Activated CD8-positive, alpha-beta T cell treated with anti-CD3 and anti-CD28 coated beads, Interleukin-2, amount 10 ng/mL, durations not matched to agents 7 days and 5 days (primary cell): ENCODE measurements at regions of chr18 and their contacts with region 1.

Region 1: DNA sequence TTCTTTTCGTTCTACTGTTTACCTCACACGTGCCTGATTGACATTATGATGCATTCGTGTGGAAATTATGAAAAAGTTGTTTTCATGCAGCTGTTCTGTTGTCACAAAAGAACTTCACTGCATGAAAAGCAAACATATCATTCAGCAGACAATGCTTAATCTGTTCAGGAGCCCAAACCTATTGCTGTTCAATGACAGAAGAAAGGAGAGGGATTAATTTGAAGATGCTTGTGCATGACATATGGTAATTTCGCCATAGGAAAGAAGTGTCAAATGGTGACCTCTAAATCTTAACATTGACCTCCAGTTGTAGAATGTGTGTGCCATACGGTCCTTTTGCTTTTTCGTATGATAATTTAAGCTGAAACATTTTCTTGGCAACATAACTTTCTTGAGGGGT is 124.5 kb downstream of the WDR7 start:
- DNase-seq: no peak
- ATAC-seq: no peak
- H3K4me3 Mint-ChIP-seq: no peak overlapping the region
- H3K27ac Mint-ChIP-seq: no peak overlapping the region
- H3K4me1 Mint-ChIP-seq: no peaks in the 10 kb centered on the region
- H3K27me3 Mint-ChIP-seq: no peaks in the 10 kb centered on the region

Region 2: GRCh38 chr18:56593906-56594305 is 181.8 kb before region 1 on chr18:
- CTCF ChIA-PET with region 1: no interaction called
- POLR2A ChIA-PET with region 1: no interaction called
- DNase-seq: no peak
- ATAC-seq: no peak
- H3K4me3 Mint-ChIP-seq: no peak overlapping the region
- H3K27ac Mint-ChIP-seq: no peak overlapping the region
- H3K4me1 Mint-ChIP-seq: no peaks in the 10 kb centered on the region
- H3K27me3 Mint-ChIP-seq: peaks cover 2% of the 10 kb centered on the region

Region 3: GRCh38 chr18:56748698-56749268 is 26.9 kb before region 1 on chr18:
- CTCF ChIA-PET with region 1: no interaction called
- POLR2A ChIA-PET with region 1: no interaction called
- DNase-seq: no peak
- ATAC-seq: no peak
- H3K4me3 Mint-ChIP-seq: no peak overlapping the region
- H3K27ac Mint-ChIP-seq: no peak overlapping the region
- H3K4me1 Mint-ChIP-seq: peaks cover 18% of the 10 kb centered on the region
- H3K27me3 Mint-ChIP-seq: no peaks in the 10 kb centered on the region

Region 4: DNA sequence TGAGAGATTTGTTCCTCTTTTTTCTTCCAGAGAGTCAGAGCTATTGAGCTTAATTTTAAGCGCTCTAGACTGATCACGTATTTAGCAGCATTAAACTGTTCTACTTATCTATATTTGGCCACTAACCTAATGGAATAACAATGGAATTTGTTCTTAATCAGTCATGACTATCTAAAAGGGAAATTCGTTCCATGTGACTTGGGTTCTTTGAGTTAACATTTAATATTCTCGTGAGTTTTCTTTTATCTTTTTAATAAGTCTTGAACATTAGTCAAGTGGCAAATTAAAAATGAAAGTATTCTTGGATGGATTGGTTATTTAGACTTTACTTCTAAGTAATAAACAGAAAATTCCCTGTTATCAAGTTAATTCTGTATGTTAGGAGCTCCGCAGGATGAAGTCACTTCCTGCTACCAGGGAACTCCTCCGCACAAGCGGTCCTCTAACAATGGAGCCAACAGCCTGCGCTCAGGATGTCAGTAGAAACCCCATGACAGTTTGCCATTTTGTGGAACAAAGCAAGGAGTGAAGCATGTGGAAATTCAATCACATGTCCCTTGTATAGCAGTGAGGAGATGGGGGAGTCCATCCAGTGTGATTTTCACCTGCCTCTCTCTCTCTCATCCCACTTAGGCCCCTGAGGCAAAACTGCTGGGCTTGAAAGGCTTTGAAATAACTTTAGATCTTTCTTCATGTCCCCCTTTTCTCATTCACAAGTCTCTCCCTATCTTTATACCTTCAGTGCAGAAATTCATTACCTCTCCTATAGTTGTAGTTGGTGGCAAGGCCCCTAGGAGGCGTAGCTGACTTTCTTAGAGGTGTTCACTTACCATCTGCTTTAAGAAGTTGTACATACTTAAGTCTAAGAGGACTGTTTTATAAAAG is 13.5 kb after region 1 on chr18:
- CTCF ChIA-PET with region 1: interaction called, 12 read pairs
- POLR2A ChIA-PET with region 1: no interaction called
- DNase-seq: peak; percentile 38
- ATAC-seq: no peak
- H3K4me3 Mint-ChIP-seq: no peak overlapping the region
- H3K27ac Mint-ChIP-seq: no peak overlapping the region
- H3K4me1 Mint-ChIP-seq: no peaks in the 10 kb centered on the region
- H3K27me3 Mint-ChIP-seq: no peaks in the 10 kb centered on the region

Region 5: DNA sequence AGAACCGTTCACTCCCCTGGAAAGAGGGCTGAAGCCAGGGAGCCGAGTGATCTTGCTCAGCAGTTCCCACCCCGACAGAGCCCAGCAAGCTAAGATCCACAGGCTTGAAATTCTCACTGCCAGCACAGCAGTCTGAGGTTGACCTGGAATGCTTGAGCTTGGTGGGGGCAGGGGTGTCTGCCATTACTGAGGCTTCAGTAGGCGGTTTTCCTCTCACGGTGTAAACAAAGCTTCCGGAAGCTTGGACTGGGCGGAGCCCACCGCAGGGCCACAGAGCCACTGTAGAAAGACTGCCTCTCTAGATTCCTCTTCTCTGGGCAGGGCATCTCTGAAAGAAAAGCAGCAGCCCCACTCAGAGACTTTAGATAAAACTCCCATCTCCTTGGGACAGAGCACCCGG is 56.3 kb after region 1 on chr18:
- CTCF ChIA-PET with region 1: no interaction called
- POLR2A ChIA-PET with region 1: no interaction called
- DNase-seq: no peak
- ATAC-seq: no peak
- H3K4me3 Mint-ChIP-seq: no peak overlapping the region
- H3K27ac Mint-ChIP-seq: no peak overlapping the region
- H3K4me1 Mint-ChIP-seq: peaks cover 6% of the 10 kb centered on the region
- H3K27me3 Mint-ChIP-seq: no peaks in the 10 kb centered on the region

Region 6: DNA sequence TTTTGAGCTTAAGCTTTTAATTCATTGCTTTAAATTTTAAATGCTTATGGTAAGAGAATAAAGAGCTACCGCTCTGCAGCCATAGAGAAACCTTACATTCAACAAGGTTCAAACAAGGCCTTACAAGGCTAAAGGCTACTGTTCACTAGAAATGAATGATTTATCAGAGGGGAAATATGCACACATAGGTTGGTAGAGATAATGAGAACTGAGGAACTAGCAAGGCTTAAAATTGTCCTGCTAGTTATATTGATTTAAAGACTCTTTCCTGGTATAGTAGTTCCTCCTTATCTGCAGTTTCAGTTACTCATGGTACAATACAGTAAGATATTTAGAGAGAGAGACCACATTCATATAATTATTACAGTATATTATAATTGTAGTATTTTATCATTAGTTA is 68.9 kb after region 1 on chr18:
- CTCF ChIA-PET with region 1: no interaction called
- POLR2A ChIA-PET with region 1: no interaction called
- DNase-seq: no peak
- ATAC-seq: no peak
- H3K4me3 Mint-ChIP-seq: no peak overlapping the region
- H3K27ac Mint-ChIP-seq: no peak overlapping the region
- H3K4me1 Mint-ChIP-seq: no peaks in the 10 kb centered on the region
- H3K27me3 Mint-ChIP-seq: no peaks in the 10 kb centered on the region